Natural killer cell (primary cell): ENCODE measurements at regions of chr16 and their contacts with region 1.

Region 1: GRCh38 chr16:58511933-58512815 is 3.1 kb upstream of the SETD6 start:
- DNase-seq: peak; percentile 74 to 88
- ATAC-seq: peak in 2 of 3 donors; percentile 34 to 42
- H3K4me3 ChIP-seq: no peak overlapping the region
- H3K4me3 Mint-ChIP-seq: peak overlapping the region; percentile 67
- H3K27ac ChIP-seq: no peak overlapping the region
- H3K27ac Mint-ChIP-seq: peak overlapping the region in 1 of 2 donors; percentile 68
- H3K4me1 ChIP-seq: peaks cover 17% of the 10 kb centered on the region
- H3K4me1 Mint-ChIP-seq: peaks cover 12 to 13% of the 10 kb centered on the region in 2 donors
- H3K27me3 ChIP-seq: no peaks in the 10 kb centered on the region
- H3K27me3 Mint-ChIP-seq: no peaks in the 10 kb centered on the region
- CTCF ChIP-seq: peak; percentile 83

Region 2: DNA sequence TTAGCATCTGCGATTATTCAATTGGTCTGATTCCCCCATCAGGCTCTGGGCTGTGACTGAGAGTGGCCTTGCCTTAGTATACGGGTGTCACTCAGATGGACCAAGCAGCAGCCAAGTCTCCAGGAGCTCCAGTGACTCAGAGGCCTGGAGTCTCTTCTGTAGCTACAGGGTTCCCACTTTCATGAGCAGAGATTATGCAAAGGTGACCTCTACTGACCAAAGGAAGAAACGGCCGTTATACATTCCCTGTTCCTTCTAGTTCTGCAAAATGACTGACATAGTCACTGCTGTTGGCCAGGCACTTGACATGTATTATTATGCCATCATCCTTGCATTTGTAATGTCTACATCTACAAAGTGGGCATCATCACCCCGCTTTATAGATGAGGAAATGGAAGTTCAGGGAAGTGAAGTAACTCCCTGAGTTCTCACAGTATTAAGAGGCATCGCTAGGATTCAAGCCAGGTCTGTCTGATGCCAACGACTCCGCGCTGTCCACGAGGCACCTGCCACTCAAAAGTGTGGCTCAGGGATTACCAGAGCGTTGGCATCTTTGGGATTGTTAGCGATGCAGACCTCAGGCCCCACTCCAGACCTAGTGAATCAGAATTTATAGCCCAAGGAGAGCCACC is 149.1 kb after region 1 on chr16:
- intact Hi-C with region 1: loop called (anchors 1 kb)
- DNase-seq: peak in 1 of 2 donors; percentile 50
- ATAC-seq: peak; percentile 58 to 78 (median 73)
- H3K4me3 ChIP-seq: no peak overlapping the region
- H3K4me3 Mint-ChIP-seq: no peak overlapping the region
- H3K27ac ChIP-seq: no peak overlapping the region
- H3K27ac Mint-ChIP-seq: no peak overlapping the region
- H3K4me1 ChIP-seq: no peaks in the 10 kb centered on the region
- H3K4me1 Mint-ChIP-seq: no peaks in the 10 kb centered on the region
- H3K27me3 ChIP-seq: no peaks in the 10 kb centered on the region
- H3K27me3 Mint-ChIP-seq: peaks cover 0 to 3% of the 10 kb centered on the region in 2 donors
- CTCF ChIP-seq: no peak

Region 3: GRCh38 chr16:58755989-58756649 is 243.9 kb after region 1 on chr16:
- intact Hi-C with region 1: loop called (anchors 1 kb)
- DNase-seq: peak; percentile 45 to 88
- ATAC-seq: peak; percentile 89 to 93 (median 92)
- H3K4me3 ChIP-seq: no peak overlapping the region
- H3K4me3 Mint-ChIP-seq: peak overlapping the region; percentile 43
- H3K27ac ChIP-seq: no peak overlapping the region
- H3K27ac Mint-ChIP-seq: peak overlapping the region; percentile 45 to 70
- H3K4me1 ChIP-seq: peaks cover 8% of the 10 kb centered on the region
- H3K4me1 Mint-ChIP-seq: peaks cover 10% of the 10 kb centered on the region in 2 donors
- H3K27me3 ChIP-seq: no peaks in the 10 kb centered on the region
- H3K27me3 Mint-ChIP-seq: peaks cover 0 to 2% of the 10 kb centered on the region in 2 donors
- CTCF ChIP-seq: peak; percentile 64